PC-9 (cell line): ENCODE measurements at regions of chr10 and their contacts with region 1.

Region 1: DNA sequence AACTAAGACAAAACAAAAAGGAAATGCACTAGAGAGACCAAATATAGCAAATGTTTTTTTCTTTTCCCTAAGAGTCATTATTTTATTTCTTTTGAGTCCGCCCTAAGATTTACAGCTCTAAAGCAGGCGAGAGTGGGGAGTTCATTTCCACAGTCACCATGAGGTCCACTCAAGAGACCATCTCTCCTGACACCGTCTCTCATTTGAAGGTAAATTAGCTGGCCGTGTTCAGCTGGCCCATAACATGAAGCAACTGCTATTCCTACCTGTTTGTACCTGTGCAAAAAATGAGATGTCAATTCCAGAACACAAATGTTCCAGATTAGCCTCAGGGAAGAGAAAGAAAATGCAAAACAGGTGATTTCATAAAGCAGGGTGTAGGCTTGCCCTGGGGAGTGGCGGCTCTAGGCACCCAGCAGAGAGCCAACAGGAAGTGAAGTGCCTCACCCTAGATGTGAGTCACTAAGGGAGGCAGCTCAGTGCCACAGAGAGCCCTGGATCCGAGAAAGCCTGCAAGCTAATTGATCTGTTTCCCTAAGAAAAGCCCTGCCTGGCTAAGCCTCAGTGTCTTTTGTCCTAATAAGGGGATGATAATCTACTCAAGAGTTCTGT is 240.1 kb downstream of the ARHGAP21 start:
- DNase-seq: peak; percentile 85 to 94
- H3K4me3 ChIP-seq: no peak overlapping the region
- H3K27ac ChIP-seq: peak overlapping the region; percentile 58
- H3K4me1 ChIP-seq: peaks cover 31% of the 10 kb centered on the region
- H3K27me3 ChIP-seq: no peaks in the 10 kb centered on the region
- CTCF ChIP-seq: no peak

Region 2: DNA sequence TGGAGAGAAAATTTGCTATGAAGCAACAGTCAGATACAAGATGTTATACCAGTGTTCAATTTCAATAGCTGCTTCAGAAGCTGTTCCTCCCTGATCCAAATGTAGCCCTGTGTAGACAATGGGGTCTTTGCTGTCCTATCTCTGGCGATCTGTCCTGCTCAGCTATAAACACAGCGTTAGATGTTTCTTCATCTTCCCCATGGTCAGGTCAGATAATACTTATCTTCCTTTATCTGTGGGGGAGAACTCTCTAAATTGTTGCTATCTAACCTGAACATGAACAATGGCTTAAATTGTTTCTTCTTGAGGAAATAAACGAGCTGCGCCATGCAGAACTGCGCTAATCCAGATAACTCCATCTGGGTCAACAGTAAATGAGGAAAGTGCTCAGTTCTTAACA is 290.3 kb before region 1 on chr10:
- CTCF ChIA-PET with region 1: no interaction called
- POLR2A ChIA-PET with region 1: interaction called, 14 read pairs
- intact Hi-C with region 1: no loop called
- DNase-seq: no peak
- H3K4me3 ChIP-seq: no peak overlapping the region
- H3K27ac ChIP-seq: no peak overlapping the region
- H3K4me1 ChIP-seq: no peaks in the 10 kb centered on the region
- H3K27me3 ChIP-seq: no peaks in the 10 kb centered on the region
- CTCF ChIP-seq: no peak

Region 3: DNA sequence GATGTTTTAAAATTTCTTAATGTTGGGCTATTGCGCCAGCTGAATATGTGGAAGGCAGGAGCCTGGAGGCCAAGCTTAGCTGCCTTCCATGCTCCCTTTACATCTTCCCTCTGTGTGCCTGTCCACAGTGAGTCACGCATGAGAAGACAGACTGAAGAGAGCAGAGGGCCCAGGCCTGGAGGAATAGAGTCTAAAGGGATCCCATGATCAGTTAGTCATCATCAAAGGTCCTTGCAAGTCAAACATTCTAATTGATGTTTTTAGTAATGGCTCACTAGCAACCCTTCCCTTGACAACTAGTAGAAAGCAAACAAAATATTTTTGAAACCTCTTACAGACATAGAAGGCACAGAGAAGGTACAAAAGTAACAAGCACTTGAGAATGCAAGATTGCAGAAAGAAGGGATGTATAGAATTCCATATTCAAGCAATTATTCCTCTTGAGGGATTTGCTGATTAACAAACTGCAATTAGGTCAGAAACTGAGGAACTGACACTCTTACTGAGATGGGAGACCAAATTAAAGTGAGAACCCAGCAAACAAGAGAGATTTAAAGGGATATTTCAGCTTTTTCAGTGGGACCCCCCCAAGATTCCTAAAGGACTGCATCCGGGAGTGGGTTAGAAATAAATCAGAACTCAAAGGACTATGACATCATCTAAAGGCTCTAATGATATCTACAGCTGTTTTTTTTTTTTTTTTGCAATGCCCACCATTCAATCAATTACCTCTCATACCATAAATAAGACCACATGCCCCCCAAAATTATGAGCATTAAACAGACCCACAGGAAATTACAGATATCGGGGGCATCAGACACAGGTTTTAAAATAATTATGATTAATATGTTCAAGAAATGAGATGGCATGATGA is 1924.0 kb after region 1 on chr10:
- CTCF ChIA-PET with region 1: interaction called, 11 read pairs
- POLR2A ChIA-PET with region 1: no interaction called
- intact Hi-C with region 1: no loop called
- DNase-seq: no peak
- H3K4me3 ChIP-seq: no peak overlapping the region
- H3K27ac ChIP-seq: no peak overlapping the region
- H3K4me1 ChIP-seq: no peaks in the 10 kb centered on the region
- H3K27me3 ChIP-seq: no peaks in the 10 kb centered on the region
- CTCF ChIP-seq: no peak